Heart right ventricle (tissue), 16 donors: ENCODE measurements at regions of chr1 and their contacts with region 1.

Region 1: DNA sequence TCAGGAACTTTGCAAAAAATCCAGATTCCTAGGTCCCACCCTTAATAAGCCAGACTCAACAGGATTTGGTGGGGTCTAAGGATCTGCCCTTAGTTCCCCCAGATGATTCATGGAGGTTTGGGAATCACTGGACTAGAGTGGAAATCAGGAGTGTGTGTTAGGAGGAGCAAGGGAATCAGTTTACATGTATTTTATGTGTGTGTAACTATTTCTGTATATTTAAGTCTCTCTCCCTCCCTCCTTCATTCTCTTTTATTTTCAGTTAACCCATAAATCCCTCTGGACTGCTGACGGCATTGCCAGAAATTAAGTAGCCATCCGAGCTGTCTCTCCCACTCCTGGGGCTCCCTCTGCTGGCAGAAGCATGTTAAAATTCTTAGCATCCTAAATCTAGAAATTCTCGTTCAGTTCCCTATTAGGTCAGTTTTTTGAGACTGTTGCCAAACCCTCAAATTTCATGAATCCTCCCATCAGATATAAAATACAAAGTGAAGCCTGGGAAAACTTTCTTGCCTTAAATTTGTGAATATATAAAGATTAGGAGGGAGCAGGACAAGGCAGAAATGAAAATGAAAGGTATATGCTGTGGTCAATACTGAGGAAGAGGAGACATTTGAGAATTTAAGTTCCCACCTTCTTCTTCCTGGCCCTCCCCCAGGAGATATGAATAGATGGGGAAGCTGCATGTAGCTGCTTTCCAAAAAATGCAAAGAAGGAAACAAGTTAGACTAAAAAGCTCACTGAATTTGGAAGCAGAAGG is 11.7 kb upstream of the HSD11B1 start:
- DNase-seq: peak; percentile 60 to 86
- ATAC-seq: peak; percentile 46 to 79 (median 65)
- H3K4me3 ChIP-seq: no peak overlapping the region
- H3K27ac ChIP-seq: peak overlapping the region in 2 of 10 donors; percentile 5 to 69
- H3K4me1 ChIP-seq: peaks cover 0 to 36% (median 19%) of the 10 kb centered on the region in 9 donors
- H3K27me3 ChIP-seq: no peaks in the 10 kb centered on the region
- CTCF ChIP-seq: peak; percentile 64 to 94 (median 86)

Region 2: GRCh38 chr1:209576798-209577197 is 116.1 kb before region 1 on chr1:
- intact Hi-C with region 1: loop called (anchors 1 to 5 kb)
- DNase-seq: peak; percentile 81 to 84
- ATAC-seq: peak; percentile 90 to 97 (median 94)
- H3K4me3 ChIP-seq: no peak overlapping the region
- H3K27ac ChIP-seq: no peak overlapping the region
- H3K4me1 ChIP-seq: peaks cover 0 to 5% (median 0%) of the 10 kb centered on the region in 9 donors
- H3K27me3 ChIP-seq: peaks cover 0 to 39% (median 18%) of the 10 kb centered on the region in 7 donors
- CTCF ChIP-seq: peak; percentile 81 to 98 (median 96)

Region 3: GRCh38 chr1:209601809-209602657 is 90.9 kb before region 1 on chr1:
- intact Hi-C with region 1: loop called in 7 of 10 experiments (anchors 1 to 5 kb)
- DNase-seq: peak in 1 of 2 donors; percentile 20
- ATAC-seq: peak in 7 of 8 donors; percentile 59 to 93 (median 76)
- H3K4me3 ChIP-seq: no peak overlapping the region
- H3K27ac ChIP-seq: no peak overlapping the region
- H3K4me1 ChIP-seq: peaks cover 0 to 8% (median 0%) of the 10 kb centered on the region in 9 donors
- H3K27me3 ChIP-seq: peaks cover 0 to 15% (median 0%) of the 10 kb centered on the region in 7 donors
- CTCF ChIP-seq: peak; percentile 18 to 79 (median 70)

Region 4: DNA sequence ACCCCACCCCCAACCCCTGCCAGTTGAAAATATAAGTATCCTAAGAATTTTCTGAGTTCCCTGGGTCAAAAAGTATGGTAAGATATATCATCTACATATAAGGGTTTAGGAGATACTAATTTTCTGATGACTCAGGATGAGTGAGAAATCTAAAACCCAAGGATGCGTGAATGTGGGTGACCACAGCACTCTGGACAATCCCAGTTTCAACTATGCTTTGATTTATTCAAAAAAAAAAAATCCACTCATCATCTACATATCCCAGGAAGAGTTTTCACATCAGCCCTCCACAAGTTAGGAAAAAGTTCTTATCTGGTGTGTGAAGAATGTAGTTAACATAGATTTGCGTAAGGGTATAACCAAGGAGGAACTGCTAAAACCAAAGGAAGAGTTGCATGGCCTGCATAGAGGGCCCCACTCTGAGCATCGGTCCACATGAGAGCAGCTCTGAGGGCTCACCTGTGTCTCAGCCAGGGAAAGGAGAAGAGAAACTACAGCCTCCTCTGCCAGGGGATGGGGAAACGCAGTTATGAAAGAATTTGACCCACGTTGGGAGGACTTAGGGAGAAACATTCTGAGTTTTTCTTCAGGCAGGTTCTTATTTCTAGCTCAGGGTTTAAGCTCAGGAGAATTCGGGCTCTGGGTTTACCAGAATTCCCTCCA is 59.5 kb before region 1 on chr1:
- intact Hi-C with region 1: loop called in 5 of 10 experiments (anchors 5 to 10 kb)
- DNase-seq: no peak
- ATAC-seq: no peak
- H3K4me3 ChIP-seq: no peak overlapping the region
- H3K27ac ChIP-seq: no peak overlapping the region
- H3K4me1 ChIP-seq: peaks cover 0 to 36% (median 19%) of the 10 kb centered on the region in 9 donors
- H3K27me3 ChIP-seq: no peaks in the 10 kb centered on the region
- CTCF ChIP-seq: no peak

Region 5: DNA sequence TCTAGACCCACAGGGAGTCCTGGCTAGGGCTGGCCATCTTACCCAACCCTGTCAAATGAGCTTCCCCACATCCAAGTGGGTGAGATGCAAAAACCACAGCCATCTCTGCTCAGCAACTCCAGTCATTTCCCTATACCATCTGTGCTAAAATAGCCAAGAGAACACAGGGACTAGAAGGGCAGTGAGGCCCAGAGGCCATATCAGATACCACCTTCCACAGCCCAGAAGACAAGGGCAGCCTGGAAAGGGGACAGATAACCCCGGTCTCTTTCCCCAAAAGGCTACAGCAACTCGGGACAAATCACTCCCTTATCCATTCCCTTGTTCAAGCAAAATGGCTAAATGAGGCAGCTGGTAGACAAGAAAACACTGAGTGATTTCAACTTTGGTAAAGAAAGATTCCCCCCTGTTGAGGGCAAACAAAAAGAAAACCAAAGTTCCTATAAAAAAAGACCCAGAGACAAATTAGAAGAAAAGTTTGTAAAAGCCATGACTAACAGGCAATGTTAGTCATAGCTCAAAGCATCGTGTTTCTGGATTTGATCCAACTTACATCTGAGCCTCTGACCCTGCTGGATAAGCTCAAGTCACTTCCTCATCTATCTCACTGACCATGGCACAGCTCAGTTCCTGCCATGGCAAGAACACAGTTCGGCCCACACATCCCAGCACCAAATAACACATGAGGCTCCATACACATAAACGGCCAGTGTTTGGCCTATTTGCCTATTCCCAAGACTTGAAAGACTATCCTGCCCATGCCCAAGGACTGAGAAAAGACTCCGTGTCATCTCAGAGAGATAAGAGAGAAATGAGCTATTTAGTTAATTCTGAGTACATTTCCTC is 43.8 kb before region 1 on chr1:
- intact Hi-C with region 1: loop called in 4 of 10 experiments (anchors 5 kb)
- DNase-seq: no peak
- ATAC-seq: peak in 5 of 8 donors; percentile 23 to 74 (median 42)
- H3K4me3 ChIP-seq: no peak overlapping the region
- H3K27ac ChIP-seq: peak overlapping the region in 9 of 10 donors; percentile 10 to 97 (median 42)
- H3K4me1 ChIP-seq: peaks cover 30 to 97% (median 77%) of the 10 kb centered on the region in 9 donors
- H3K27me3 ChIP-seq: no peaks in the 10 kb centered on the region
- CTCF ChIP-seq: no peak

Region 6: GRCh38 chr1:209720326-209720725 is 27.4 kb after region 1 on chr1:
- intact Hi-C with region 1: no loop called
- DNase-seq: peak in 1 of 2 donors; percentile 29
- ATAC-seq: peak; percentile 48 to 89 (median 83)
- H3K4me3 ChIP-seq: no peak overlapping the region
- H3K27ac ChIP-seq: peak overlapping the region in 8 of 10 donors; percentile 36 to 83 (median 70)
- H3K4me1 ChIP-seq: peaks cover 0 to 23% (median 3%) of the 10 kb centered on the region in 9 donors
- H3K27me3 ChIP-seq: no peaks in the 10 kb centered on the region
- CTCF ChIP-seq: no peak

Region 7: DNA sequence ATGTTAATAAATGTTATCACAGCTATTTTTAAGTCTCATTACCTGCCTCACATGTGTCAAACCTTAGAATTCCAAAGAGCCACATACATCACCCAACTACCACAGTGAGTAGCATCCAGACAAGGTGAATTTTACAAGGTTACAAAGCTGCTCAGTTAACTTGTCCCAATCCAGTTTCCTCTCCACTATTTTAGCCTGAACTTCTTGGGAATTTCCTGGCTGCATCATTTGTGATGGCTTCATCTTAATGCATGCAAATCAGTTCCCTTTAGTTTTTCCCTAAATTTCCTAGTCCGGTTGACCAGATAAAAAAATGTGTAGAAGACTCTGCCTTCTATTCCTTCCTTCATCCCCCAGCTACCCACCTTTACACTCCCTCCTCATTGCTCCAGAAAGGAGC is 62.3 kb after region 1 on chr1:
- intact Hi-C with region 1: no loop called
- DNase-seq: no peak
- ATAC-seq: no peak
- H3K4me3 ChIP-seq: no peak overlapping the region
- H3K27ac ChIP-seq: peak overlapping the region in 2 of 10 donors; percentile 13 to 92
- H3K4me1 ChIP-seq: peaks cover 0 to 61% (median 0%) of the 10 kb centered on the region in 9 donors
- H3K27me3 ChIP-seq: no peaks in the 10 kb centered on the region
- CTCF ChIP-seq: no peak

Region 8: DNA sequence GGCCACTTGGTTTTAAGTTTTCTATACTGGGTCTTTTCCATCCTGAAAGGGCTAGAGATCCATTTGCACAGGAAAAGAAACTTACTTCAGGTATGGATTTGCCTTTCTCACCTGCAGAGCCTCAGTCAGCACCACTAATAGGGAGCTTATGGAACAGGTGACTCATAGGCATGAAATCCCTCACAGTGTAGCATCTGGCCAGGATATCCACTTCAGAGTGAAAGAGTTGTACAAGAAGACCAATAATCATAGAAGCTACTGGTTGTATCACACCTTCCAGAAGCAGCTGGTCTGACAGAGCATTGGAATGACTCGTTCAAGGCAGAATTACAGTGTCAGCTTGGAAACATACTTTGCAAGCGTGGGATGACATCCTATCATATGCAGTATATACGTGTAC is 218.8 kb after region 1 on chr1:
- intact Hi-C with region 1: no loop called
- DNase-seq: no peak
- ATAC-seq: no peak
- H3K4me3 ChIP-seq: no peak overlapping the region
- H3K27ac ChIP-seq: no peak overlapping the region
- H3K4me1 ChIP-seq: no peaks in the 10 kb centered on the region
- H3K27me3 ChIP-seq: no peaks in the 10 kb centered on the region
- CTCF ChIP-seq: no peak